ENCODE measurements at regions of chr1 and their contacts with region 1.

Region 1: DNA sequence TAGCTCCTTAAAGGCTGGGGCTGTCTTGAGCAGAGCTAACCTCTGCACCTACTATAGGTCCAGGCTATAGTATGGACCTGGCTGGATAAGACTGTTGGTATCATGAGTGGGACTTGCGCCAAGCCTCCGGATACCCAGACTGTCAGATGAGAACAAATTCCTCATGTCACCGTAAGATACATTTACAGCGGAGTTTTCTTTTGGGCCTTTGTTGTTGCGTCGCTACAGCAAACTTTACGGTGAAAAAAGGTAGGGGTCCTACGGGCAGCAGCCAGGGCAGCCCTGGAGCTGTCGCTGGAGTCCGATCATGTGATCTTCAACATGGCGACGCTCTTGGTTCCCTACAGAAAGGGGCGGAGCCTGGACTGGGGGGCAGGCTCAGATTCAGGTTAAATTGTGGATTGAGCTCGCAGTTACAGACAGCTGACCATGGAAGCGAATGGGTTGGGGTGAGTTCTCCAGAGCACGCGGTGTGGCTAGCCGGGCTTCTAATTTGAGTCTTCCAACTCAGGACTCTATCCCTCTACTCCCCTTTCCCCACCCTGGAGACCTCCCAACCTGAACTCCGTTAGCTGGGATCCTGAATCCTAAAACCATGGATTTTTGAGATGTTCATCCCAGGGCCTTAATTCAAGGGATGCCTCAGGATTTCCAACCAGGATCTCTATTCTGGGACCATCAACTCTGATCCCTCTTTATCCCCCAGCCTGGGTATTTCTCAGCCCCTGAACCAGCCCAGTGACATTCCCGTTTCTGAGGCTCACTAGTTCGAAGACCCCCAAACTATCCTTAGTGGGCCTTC is at the start of gene UROD:
- DNase-seq: peak; percentile 91 to 93
- H3K4me3 ChIP-seq: peak within 1 kb of the TSS; percentile 62
- H3K4me3 Mint-ChIP-seq: peak within 1 kb of the TSS; percentile 71
- H3K27ac Mint-ChIP-seq: peak within 1 kb of the TSS; percentile 58
- H3K4me1 ChIP-seq: peaks cover 4% of the 10 kb centered on the region; the same call in 1 of the 2 replicates
- H3K4me1 Mint-ChIP-seq: no peaks in the 10 kb centered on the region
- H3K27me3 ChIP-seq: no peaks in the 10 kb centered on the region
- H3K27me3 Mint-ChIP-seq: no peaks in the 10 kb centered on the region
- CTCF ChIP-seq: no peak
- total RNA-seq, gene UROD: 44.8 and 54.3 TPM in 2 replicates

Region 2: GRCh38 chr1:44792783-44793714 is 219.0 kb before region 1 on chr1:
- CTCF ChIA-PET with region 1: interaction called, 10 read pairs
- POLR2A ChIA-PET with region 1: no interaction called
- intact Hi-C with region 1: loop called (anchors 5 kb)
- DNase-seq: no peak
- H3K4me3 ChIP-seq: no peak overlapping the region
- H3K4me3 Mint-ChIP-seq: peak overlapping the region; percentile 4
- H3K27ac Mint-ChIP-seq: peak overlapping the region; percentile 74
- H3K4me1 ChIP-seq: 0 out of 2 replicates have a peak, but pooled peaks cover 5% of the 10 kb centered on the region
- H3K4me1 Mint-ChIP-seq: peaks cover 14% of the 10 kb centered on the region
- H3K27me3 ChIP-seq: no peaks in the 10 kb centered on the region
- H3K27me3 Mint-ChIP-seq: no peaks in the 10 kb centered on the region
- CTCF ChIP-seq: no peak

Region 3: DNA sequence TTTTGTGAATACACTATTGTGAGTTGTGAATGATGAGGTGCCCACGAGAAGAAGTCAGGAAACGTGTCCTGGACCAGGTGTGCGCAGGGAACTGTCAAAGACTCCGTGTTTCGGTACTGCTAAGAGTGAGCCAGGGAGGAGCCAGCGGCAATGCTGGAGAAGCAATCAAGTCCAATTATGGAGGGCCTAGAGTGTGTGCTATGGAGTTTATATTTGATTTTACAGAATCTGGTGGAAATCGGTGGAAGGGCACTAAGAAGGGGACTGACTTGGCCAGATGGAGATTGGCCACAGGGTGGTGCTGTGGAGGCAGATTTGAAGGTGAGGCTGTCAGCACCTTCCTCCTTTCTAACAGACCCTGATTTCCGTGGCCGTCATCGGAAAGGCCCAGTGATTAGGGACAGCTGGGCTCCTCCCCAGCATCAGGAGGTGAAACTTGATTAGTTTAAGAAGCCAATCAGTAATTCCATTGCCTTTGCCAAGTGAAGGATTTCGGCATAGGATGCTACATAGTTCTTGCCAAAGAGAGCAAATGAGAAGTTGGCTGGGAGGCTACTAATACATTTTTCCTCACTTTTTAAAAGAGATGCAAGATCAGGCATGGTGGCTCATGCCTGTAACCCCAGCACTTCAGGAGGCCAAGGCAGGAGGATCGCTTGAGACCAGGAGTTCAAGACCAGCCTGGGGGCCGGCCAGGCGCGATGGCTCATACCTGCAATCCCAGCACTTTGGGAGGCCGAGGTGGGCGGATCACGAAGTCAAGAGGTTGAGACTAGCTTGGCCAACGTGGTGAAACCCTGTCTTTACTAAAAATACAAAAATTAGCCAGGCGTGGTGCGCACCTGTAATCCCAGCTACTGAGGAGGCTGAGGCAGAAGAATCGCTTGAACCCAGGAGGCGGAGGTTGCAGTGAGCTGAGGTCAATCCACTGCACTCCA is 176.0 kb before region 1 on chr1:
- CTCF ChIA-PET with region 1: no interaction called
- POLR2A ChIA-PET with region 1: no interaction called
- intact Hi-C with region 1: loop called (anchors 2 kb)
- DNase-seq: peak; percentile 79 to 83
- H3K4me3 ChIP-seq: no peak overlapping the region
- H3K4me3 Mint-ChIP-seq: no peak overlapping the region
- H3K27ac Mint-ChIP-seq: no peak overlapping the region
- H3K4me1 ChIP-seq: no peaks in the 10 kb centered on the region
- H3K4me1 Mint-ChIP-seq: no peaks in the 10 kb centered on the region
- H3K27me3 ChIP-seq: no peaks in the 10 kb centered on the region
- H3K27me3 Mint-ChIP-seq: no peaks in the 10 kb centered on the region
- CTCF ChIP-seq: peak; percentile 70 to 82

Region 4: DNA sequence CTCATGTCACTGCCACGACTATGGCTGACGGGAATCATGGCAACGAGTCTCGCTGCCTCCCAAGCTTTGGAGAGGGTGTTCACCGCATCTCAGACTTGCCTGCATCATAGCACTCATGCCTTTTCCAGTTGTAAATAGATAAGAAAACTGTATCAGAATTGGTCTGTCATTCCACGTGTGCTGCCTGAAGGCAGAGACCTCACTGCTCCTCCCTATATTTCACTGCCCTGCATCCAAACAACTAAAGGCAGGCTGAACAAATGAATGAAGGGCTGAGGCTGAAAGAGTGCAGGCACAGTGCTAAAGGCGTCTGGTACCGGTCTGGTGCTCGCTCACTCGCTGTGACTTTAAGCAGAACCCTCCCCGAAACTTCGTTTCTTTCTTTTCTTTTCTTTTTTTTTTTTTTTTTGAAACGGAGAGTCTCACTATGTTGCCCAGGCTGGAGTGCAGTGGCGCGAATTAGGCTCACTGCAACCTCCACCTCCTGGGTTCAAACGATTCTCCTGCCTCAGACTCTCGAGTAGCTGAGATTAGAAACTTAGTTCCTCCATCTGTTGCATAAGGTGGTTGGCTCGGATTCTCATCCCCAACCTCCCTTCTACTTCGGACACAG is 26.2 kb before region 1 on chr1:
- CTCF ChIA-PET with region 1: no interaction called
- POLR2A ChIA-PET with region 1: interaction called, 3 read pairs
- intact Hi-C with region 1: loop called (anchors 1 kb)
- DNase-seq: no peak
- H3K4me3 ChIP-seq: peak overlapping the region; percentile 76
- H3K4me3 Mint-ChIP-seq: peak overlapping the region; percentile 98
- H3K27ac Mint-ChIP-seq: peak overlapping the region; percentile 96
- H3K4me1 ChIP-seq: 0 out of 2 replicates have a peak, but pooled peaks cover 5% of the 10 kb centered on the region
- H3K4me1 Mint-ChIP-seq: no peaks in the 10 kb centered on the region
- H3K27me3 ChIP-seq: no peaks in the 10 kb centered on the region
- H3K27me3 Mint-ChIP-seq: no peaks in the 10 kb centered on the region
- CTCF ChIP-seq: no peak

Region 5: GRCh38 chr1:45205910-45206721 is 194.1 kb after region 1 on chr1 and contains the start of gene ZSWIM5:
- CTCF ChIA-PET with region 1: no interaction called
- POLR2A ChIA-PET with region 1: no interaction called
- intact Hi-C with region 1: loop called (anchors 10 kb)
- DNase-seq: peak; percentile 54 to 63
- H3K4me3 ChIP-seq: peak within 1 kb of the TSS; percentile 86
- H3K4me3 Mint-ChIP-seq: peak within 1 kb of the TSS; percentile 83
- H3K27ac Mint-ChIP-seq: no peak within 1 kb of the TSS
- H3K4me1 ChIP-seq: no peaks in the 10 kb centered on the region
- H3K4me1 Mint-ChIP-seq: no peaks in the 10 kb centered on the region
- H3K27me3 ChIP-seq: no peaks in the 10 kb centered on the region
- H3K27me3 Mint-ChIP-seq: peaks cover 11% of the 10 kb centered on the region
- CTCF ChIP-seq: no peak
- total RNA-seq, gene ZSWIM5: 0.49 and 0.54 TPM in 2 replicates

Region 6: GRCh38 chr1:45490626-45491486 is 478.8 kb after region 1 on chr1 and contains the start of gene TESK2:
- CTCF ChIA-PET with region 1: interaction called, 10 read pairs
- POLR2A ChIA-PET with region 1: interaction called, 3 read pairs
- intact Hi-C with region 1: loop called (anchors 1 kb)
- DNase-seq: peak; percentile 97 to 99
- H3K4me3 ChIP-seq: peak within 1 kb of the TSS; percentile 92
- H3K4me3 Mint-ChIP-seq: no peak within 1 kb of the TSS
- H3K27ac Mint-ChIP-seq: no peak within 1 kb of the TSS
- H3K4me1 ChIP-seq: no peaks in the 10 kb centered on the region
- H3K4me1 Mint-ChIP-seq: peaks cover 15% of the 10 kb centered on the region
- H3K27me3 ChIP-seq: no peaks in the 10 kb centered on the region
- H3K27me3 Mint-ChIP-seq: no peaks in the 10 kb centered on the region
- CTCF ChIP-seq: peak in 1 of 2 experiments; percentile 1
- total RNA-seq, gene TESK2: 11.9 and 14.7 TPM in 2 replicates

Measured in Caco-2 (cell line).